Common myeloid progenitor, CD34-positive (primary cell): ENCODE measurements at regions of chr19 and their contacts with region 1.

Region 1: DNA sequence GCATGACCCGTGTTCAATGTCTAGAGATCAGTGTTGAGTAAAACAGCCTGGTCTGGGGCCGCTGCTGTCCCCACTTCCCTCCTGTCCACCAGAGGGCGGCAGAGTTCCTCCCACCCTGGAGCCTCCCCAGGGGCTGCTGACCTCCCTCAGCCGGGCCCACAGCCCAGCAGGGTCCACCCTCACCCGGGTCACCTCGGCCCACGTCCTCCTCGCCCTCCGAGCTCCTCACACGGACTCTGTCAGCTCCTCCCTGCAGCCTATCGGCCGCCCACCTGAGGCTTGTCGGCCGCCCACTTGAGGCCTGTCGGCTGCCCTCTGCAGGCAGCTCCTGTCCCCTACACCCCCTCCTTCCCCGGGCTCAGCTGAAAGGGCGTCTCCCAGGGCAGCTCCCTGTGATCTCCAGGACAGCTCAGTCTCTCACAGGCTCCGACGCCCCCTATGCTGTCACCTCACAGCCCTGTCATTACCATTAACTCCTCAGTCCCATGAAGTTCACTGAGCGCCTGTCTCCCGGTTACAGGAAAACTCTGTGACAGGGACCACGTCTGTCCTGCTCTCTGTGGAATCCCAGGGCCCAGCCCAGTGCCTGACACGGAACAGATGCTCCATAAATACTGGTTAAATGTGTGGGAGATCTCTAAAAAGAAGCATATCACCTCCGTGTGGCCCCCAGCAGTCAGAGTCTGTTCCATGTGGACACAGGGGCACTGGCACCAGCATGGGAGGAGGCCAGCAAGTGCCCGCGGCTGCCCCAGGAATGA is 1.5 kb upstream of the CEACAM5 start:
- DNase-seq: peak; percentile 82 to 86 (median 86)
- H3K4me3 ChIP-seq: peak overlapping the region in 6 of 7 experiments; percentile 4 to 67 (median 50)
- H3K27ac ChIP-seq: no peak overlapping the region
- H3K4me1 ChIP-seq: peaks cover 0 to 2% (median 0%) of the 10 kb centered on the region in 4 experiments
- H3K27me3 ChIP-seq: peaks cover 0 to 13% (median 7%) of the 10 kb centered on the region in 5 experiments

Region 2: DNA sequence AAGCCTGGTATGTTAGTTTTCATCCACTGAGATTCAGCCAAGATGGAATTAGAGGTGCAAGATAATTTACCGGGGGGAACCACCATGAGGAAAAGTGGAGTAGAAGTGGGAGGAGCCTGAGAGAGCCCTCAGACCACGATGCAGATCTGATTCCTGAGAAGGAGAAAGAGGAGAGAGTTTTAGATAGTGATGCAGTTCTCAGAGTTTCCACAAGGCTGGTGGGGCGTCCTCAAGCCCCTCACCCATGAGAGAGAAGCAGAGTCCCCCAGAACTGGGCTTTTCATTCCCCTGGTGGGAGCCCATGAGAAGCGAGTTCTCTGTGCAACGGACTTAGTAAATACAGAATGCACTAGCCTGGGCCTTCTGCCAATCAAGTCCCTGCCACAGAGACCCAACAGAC is 19.6 kb after region 1 on chr19:
- CTCF ChIA-PET with region 1: interaction called, 11 read pairs
- POLR2A ChIA-PET with region 1: no interaction called
- DNase-seq: no peak
- H3K4me3 ChIP-seq: no peak overlapping the region
- H3K27ac ChIP-seq: no peak overlapping the region
- H3K4me1 ChIP-seq: no peaks in the 10 kb centered on the region
- H3K27me3 ChIP-seq: peaks cover 0 to 8% (median 7%) of the 10 kb centered on the region in 5 experiments

Region 3: GRCh38 chr19:41746593-41747227 is 39.8 kb after region 1 on chr19:
- CTCF ChIA-PET with region 1: interaction called, 59 read pairs
- POLR2A ChIA-PET with region 1: no interaction called
- DNase-seq: peak; percentile 80 to 88 (median 84)
- H3K4me3 ChIP-seq: no peak overlapping the region
- H3K27ac ChIP-seq: no peak overlapping the region
- H3K4me1 ChIP-seq: peaks cover 21 to 44% (median 33%) of the 10 kb centered on the region in 4 experiments
- H3K27me3 ChIP-seq: peaks cover 0 to 2% (median 2%) of the 10 kb centered on the region in 5 experiments